Panc1 (cell line): ENCODE measurements at regions of chrX and their contacts with region 1.

Region 1: GRCh38 chrX:12080265-12080664 is 58.0 kb upstream of the FRMPD4 start:
- DNase-seq: no peak
- ATAC-seq: no peak
- H3K4me3 ChIP-seq: no peak overlapping the region
- H3K27ac ChIP-seq: no peak overlapping the region
- H3K4me1 ChIP-seq: no peaks in the 10 kb centered on the region
- H3K27me3 ChIP-seq: no peaks in the 10 kb centered on the region
- CTCF ChIP-seq: peak; percentile 28; the same call in 1 of the 2 replicates

Region 2: DNA sequence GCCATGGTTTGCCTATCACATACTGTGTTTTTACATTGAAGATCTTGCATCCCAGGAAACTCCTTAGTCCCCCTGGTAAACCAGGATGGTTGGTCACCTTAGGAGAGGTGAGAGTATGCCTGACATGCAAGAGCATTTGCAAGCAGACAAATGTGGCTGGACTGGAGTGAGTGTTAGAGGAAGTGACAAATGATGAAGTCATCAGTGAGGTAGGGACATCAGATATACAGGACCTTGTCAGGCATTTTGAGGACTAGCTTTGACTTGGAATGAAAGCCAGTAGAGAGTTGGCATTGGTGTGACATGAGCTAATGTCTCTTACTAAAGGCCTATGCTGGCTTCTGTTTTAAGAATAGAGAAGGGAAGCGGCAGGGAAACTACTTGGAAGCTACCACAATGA is 182.9 kb after region 1 on chrX:
- CTCF ChIA-PET with region 1: no interaction called
- POLR2A ChIA-PET with region 1: no interaction called
- in situ Hi-C with region 1: no loop called
- intact Hi-C with region 1: no loop called
- DNase-seq: no peak
- ATAC-seq: no peak
- H3K4me3 ChIP-seq: no peak overlapping the region
- H3K27ac ChIP-seq: no peak overlapping the region
- H3K4me1 ChIP-seq: no peaks in the 10 kb centered on the region
- H3K27me3 ChIP-seq: no peaks in the 10 kb centered on the region
- CTCF ChIP-seq: no peak

Region 3: GRCh38 chrX:12701628-12702027 is 621.4 kb after region 1 on chrX:
- CTCF ChIA-PET with region 1: no interaction called
- POLR2A ChIA-PET with region 1: no interaction called
- in situ Hi-C with region 1: no loop called
- intact Hi-C with region 1: loop called (anchors 10 kb)
- DNase-seq: peak; percentile 20
- ATAC-seq: peak; percentile 80; the same call in 1 of the 2 replicates
- H3K4me3 ChIP-seq: no peak overlapping the region
- H3K27ac ChIP-seq: no peak overlapping the region
- H3K4me1 ChIP-seq: no peaks in the 10 kb centered on the region
- H3K27me3 ChIP-seq: no peaks in the 10 kb centered on the region
- CTCF ChIP-seq: peak; percentile 69

Region 4: DNA sequence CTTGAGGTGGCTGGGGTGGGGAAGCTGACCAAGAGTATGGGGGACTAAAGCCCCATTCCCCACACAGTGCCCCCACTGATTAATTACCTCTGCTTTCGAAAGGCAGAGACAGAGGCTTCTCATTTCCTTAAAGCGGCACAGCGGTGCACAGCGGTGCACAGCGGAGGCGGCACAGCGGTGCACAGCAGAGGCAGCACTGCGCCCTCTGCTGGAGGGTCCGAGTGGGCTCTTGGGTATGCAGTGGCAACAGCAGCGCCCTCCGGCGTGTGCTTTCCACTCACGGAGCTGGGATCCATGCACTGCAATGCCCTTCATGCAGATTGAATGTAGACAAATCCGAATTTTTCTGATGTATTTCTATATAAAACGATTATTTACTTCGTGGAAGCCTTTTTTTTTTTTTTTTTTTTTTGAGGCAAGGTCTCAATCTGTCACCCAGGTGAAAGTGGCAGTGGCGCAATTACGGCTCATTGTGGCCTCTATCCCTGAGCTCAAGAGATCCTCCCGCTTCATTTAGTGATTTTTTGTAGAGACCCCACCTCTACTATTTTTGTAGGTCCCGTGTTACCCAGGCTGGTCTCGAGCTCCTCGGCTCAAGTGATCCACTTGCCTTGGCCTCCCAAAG is 691.3 kb after region 1 on chrX:
- CTCF ChIA-PET with region 1: no interaction called
- POLR2A ChIA-PET with region 1: no interaction called
- in situ Hi-C with region 1: no loop called
- intact Hi-C with region 1: loop called (anchors 5 kb)
- DNase-seq: no peak
- ATAC-seq: peak; percentile 94
- H3K4me3 ChIP-seq: no peak overlapping the region
- H3K27ac ChIP-seq: no peak overlapping the region
- H3K4me1 ChIP-seq: no peaks in the 10 kb centered on the region
- H3K27me3 ChIP-seq: no peaks in the 10 kb centered on the region
- CTCF ChIP-seq: peak; percentile 93